ENCODE measurements at regions of chr3 and their contacts with region 1.

Region 1: GRCh38 chr3:46078712-46079400 is 51.6 kb upstream of the XCR1 start:
- DNase-seq: peak; percentile 66 to 90 (median 77)
- ATAC-seq: peak; percentile 100
- H3K4me3 ChIP-seq: no peak overlapping the region
- H3K27ac ChIP-seq: no peak overlapping the region
- H3K4me1 ChIP-seq: no peaks in the 10 kb centered on the region
- H3K27me3 ChIP-seq: no peaks in the 10 kb centered on the region
- CTCF ChIP-seq: peak; percentile 95 to 99 (median 98)
- POLR2A ChIP-seq: no peak

Region 2: DNA sequence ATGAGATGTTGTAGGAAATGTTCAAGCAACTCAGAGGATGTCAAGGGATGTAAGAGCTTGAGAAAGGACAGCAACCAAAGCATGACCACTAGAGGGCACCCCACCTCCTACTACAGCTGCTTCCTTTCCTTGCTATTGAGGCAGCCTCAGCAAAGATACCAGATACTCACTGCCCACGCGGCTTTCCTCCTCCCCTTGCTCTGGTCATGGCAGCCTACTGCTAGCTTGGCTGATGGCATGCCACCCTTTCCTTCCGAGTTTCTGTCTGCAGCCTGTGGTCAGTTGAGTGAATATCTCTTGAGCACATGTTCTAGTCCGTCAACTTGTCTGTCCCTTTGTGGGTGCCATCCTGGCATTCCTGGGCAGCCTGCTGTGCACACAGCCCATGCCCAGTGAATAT is 140.0 kb before region 1 on chr3:
- intact Hi-C with region 1: loop called (anchors 5 kb)
- DNase-seq: peak in 2 of 3 donors; percentile 72 to 83
- ATAC-seq: peak; percentile 87 to 97 (median 94)
- H3K4me3 ChIP-seq: no peak overlapping the region
- H3K27ac ChIP-seq: no peak overlapping the region
- H3K4me1 ChIP-seq: no peaks in the 10 kb centered on the region
- H3K27me3 ChIP-seq: no peaks in the 10 kb centered on the region
- CTCF ChIP-seq: peak; percentile 84 to 89 (median 86)
- POLR2A ChIP-seq: no peak

Measured in right lobe of liver (tissue), 6 donors.